ENCODE measurements at regions of chr6 and their contacts with region 1.

Region 1: DNA sequence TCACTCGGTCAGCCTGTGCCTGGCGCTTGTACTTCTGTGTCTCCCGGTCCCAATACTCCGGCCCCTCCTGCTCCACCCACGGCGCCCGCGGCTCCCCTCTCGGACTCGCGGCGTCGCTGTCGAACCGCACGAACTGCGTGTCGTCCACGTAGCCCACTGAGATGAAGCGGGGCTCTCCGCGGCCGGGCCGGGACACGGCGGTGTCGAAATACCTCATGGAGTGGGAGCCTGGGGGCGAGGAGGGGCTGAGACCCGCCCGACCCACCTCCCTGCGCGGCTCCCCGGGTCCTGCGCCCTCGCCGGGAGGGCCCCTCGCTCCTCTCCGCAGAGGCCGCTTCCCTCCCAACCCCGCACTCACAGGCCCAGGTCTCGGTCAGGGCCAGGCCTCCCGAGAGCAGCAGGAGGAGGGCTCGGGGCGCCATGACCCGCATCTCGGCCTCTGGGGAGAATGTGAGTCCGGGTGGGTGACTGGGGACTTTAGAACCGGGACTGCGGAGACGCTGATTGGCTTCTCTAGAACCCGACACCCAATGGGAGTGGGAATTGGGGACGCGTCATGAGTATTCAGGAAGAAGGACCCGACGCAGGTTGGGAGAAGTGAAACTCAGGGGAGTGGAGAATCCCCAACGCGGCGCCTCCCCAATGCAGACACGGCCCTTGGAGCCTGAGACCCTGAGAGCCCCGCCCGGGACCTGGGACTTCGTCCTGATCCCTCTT is at the start of gene HLA-C:
- DNase-seq: peak; percentile 98
- ATAC-seq: peak; percentile 88
- H3K4me3 ChIP-seq: peak within 1 kb of the TSS; percentile 72 to 94 (median 87)
- H3K4me3 Mint-ChIP-seq: peak within 1 kb of the TSS; percentile 98
- H3K27ac ChIP-seq: peak within 1 kb of the TSS; percentile 97 to 98
- H3K27ac Mint-ChIP-seq: peak within 1 kb of the TSS; percentile 100
- H3K4me1 ChIP-seq: peaks cover 33 to 46% of the 10 kb centered on the region in 2 donors
- H3K4me1 Mint-ChIP-seq: peaks cover 64% of the 10 kb centered on the region
- H3K27me3 ChIP-seq: no peaks in the 10 kb centered on the region
- H3K27me3 Mint-ChIP-seq: no peaks in the 10 kb centered on the region
- CTCF ChIP-seq: no peak
- total RNA-seq, gene HLA-C: 972 and 998 TPM in 2 replicates

Region 2: DNA sequence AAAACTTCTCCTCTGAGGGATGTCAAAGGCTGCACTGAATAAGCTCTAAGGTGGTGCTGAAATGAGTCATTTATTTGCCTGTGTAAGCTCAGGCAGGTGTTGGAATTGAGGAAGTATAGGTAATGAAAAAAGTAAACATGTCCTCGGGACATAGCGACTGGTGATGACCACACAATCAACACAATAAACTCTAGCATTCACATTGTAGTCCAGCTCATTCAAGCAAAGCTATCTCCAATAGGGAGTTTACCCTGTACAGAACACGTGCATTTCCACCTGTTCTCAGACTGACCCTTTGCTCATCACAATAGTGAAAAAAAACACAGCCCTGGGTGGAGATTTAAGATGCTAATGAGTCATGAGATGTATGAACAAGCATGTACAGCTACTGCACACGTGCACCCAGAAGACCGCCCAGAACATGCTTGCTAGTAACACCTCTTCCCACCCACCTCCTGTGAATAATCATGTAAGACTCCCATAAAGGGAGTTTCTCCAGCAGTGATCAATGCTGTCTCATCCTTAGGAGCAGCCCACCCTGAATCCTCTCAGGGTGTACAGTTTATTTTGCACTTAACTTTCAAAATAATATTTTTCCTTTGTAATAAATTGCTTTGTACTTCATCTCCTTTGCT is 68.3 kb before region 1 on chr6:
- CTCF ChIA-PET with region 1: no interaction called
- POLR2A ChIA-PET with region 1: interaction called, 10 read pairs
- intact Hi-C with region 1: loop called (anchors 1 kb)
- DNase-seq: peak; percentile 86
- ATAC-seq: peak; percentile 55
- H3K4me3 ChIP-seq: peak overlapping the region; percentile 52 to 96 (median 75)
- H3K4me3 Mint-ChIP-seq: peak overlapping the region; percentile 97
- H3K27ac ChIP-seq: peak overlapping the region; percentile 94 to 95
- H3K27ac Mint-ChIP-seq: peak overlapping the region; percentile 97
- H3K4me1 ChIP-seq: peaks cover 21 to 54% of the 10 kb centered on the region in 2 donors
- H3K4me1 Mint-ChIP-seq: peaks cover 50% of the 10 kb centered on the region
- H3K27me3 ChIP-seq: no peaks in the 10 kb centered on the region
- H3K27me3 Mint-ChIP-seq: no peaks in the 10 kb centered on the region
- CTCF ChIP-seq: no peak

Region 3: GRCh38 chr6:31356946-31357466 is 85.2 kb after region 1 on chr6 and contains the start of gene HLA-B:
- CTCF ChIA-PET with region 1: interaction called, 3 read pairs
- POLR2A ChIA-PET with region 1: interaction called, 38 read pairs
- intact Hi-C with region 1: loop called (anchors 1 kb)
- DNase-seq: peak; percentile 96
- ATAC-seq: peak; percentile 88
- H3K4me3 ChIP-seq: peak within 1 kb of the TSS; percentile 51 to 98 (median 87)
- H3K4me3 Mint-ChIP-seq: peak within 1 kb of the TSS; percentile 99
- H3K27ac ChIP-seq: peak within 1 kb of the TSS; percentile 98 to 100
- H3K27ac Mint-ChIP-seq: peak within 1 kb of the TSS; percentile 100
- H3K4me1 ChIP-seq: peaks cover 43 to 44% of the 10 kb centered on the region in 2 donors
- H3K4me1 Mint-ChIP-seq: peaks cover 55% of the 10 kb centered on the region
- H3K27me3 ChIP-seq: no peaks in the 10 kb centered on the region
- H3K27me3 Mint-ChIP-seq: peaks cover 3% of the 10 kb centered on the region
- CTCF ChIP-seq: no peak
- total RNA-seq, gene HLA-B: 3,910 and 4,028 TPM in 2 replicates

Measured in B cell (primary cell).